Prostate gland (tissue), 2 donors: ENCODE measurements at regions of chr6 and their contacts with region 1.

Region 1: GRCh38 chr6:35452186-35453090 is at the start of gene FANCE:
- DNase-seq: peak; percentile 94
- H3K4me3 ChIP-seq: peak within 1 kb of the TSS; percentile 49 to 64
- H3K27ac ChIP-seq: peak within 1 kb of the TSS; percentile 76 to 78
- H3K4me1 ChIP-seq: no peaks in the 10 kb centered on the region
- H3K27me3 ChIP-seq: no peaks in the 10 kb centered on the region
- CTCF ChIP-seq: peak in 1 of 4 experiments; percentile 23
- POLR2A ChIP-seq: peak; percentile 86
- total RNA-seq, gene FANCE: 7.5 to 14.0 TPM

Region 2: DNA sequence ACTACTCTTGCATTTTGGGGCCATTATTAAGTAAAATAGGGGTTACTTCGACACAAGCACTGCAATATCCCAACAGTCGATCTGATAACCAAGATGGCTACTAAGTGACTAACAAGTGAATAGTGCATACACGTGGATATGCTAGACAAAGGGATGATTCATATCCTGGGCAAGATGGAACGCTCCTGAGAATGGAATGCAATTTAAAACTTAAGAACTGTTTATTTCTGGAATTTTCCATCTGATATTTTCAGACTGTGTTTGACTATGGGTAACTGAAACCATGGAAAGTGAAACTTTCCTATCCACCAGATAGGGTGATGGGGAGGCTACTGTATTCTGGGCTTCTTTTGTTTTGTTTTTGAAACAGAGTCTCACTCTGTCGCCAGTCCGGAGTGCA is 822.4 kb before region 1 on chr6:
- intact Hi-C with region 1: no loop called
- DNase-seq: no peak
- H3K4me3 ChIP-seq: no peak overlapping the region
- H3K27ac ChIP-seq: no peak overlapping the region
- H3K4me1 ChIP-seq: no peaks in the 10 kb centered on the region
- H3K27me3 ChIP-seq: no peaks in the 10 kb centered on the region
- CTCF ChIP-seq: no peak
- POLR2A ChIP-seq: no peak

Region 3: GRCh38 chr6:35294308-35294945 is 158.0 kb before region 1 on chr6:
- intact Hi-C with region 1: loop called (anchors 5 kb)
- DNase-seq: peak; percentile 43
- H3K4me3 ChIP-seq: no peak overlapping the region
- H3K27ac ChIP-seq: no peak overlapping the region
- H3K4me1 ChIP-seq: no peaks in the 10 kb centered on the region
- H3K27me3 ChIP-seq: no peaks in the 10 kb centered on the region
- CTCF ChIP-seq: peak; percentile 44 to 80 (median 64)
- POLR2A ChIP-seq: no peak

Region 4: GRCh38 chr6:35415065-35415991 is 37.1 kb before region 1 on chr6:
- intact Hi-C with region 1: loop called (anchors 5 kb)
- DNase-seq: peak; percentile 88
- H3K4me3 ChIP-seq: no peak overlapping the region
- H3K27ac ChIP-seq: no peak overlapping the region
- H3K4me1 ChIP-seq: peaks cover 5% of the 10 kb centered on the region
- H3K27me3 ChIP-seq: no peaks in the 10 kb centered on the region
- CTCF ChIP-seq: peak; percentile 53 to 93 (median 78)
- POLR2A ChIP-seq: no peak

Region 5: GRCh38 chr6:35468181-35468979 is 15.9 kb after region 1 on chr6 and contains the start of gene RPL10A:
- intact Hi-C with region 1: loop called (anchors 2 kb)
- DNase-seq: peak; percentile 97
- H3K4me3 ChIP-seq: peak within 1 kb of the TSS; percentile 77 to 81
- H3K27ac ChIP-seq: peak within 1 kb of the TSS; percentile 90 to 93
- H3K4me1 ChIP-seq: no peaks in the 10 kb centered on the region
- H3K27me3 ChIP-seq: no peaks in the 10 kb centered on the region
- CTCF ChIP-seq: peak; percentile 94 to 100 (median 97)
- POLR2A ChIP-seq: peak; percentile 94
- total RNA-seq, gene RPL10A: 897 to 2,172 TPM

Region 6: GRCh38 chr6:35876902-35877301 is 424.5 kb after region 1 on chr6:
- intact Hi-C with region 1: no loop called
- DNase-seq: no peak
- H3K4me3 ChIP-seq: no peak overlapping the region
- H3K27ac ChIP-seq: no peak overlapping the region
- H3K4me1 ChIP-seq: no peaks in the 10 kb centered on the region
- H3K27me3 ChIP-seq: no peaks in the 10 kb centered on the region
- CTCF ChIP-seq: no peak
- POLR2A ChIP-seq: no peak

Region 7: GRCh38 chr6:35955976-35956375 is 503.5 kb after region 1 on chr6:
- intact Hi-C with region 1: no loop called
- DNase-seq: no peak
- H3K4me3 ChIP-seq: no peak overlapping the region
- H3K27ac ChIP-seq: no peak overlapping the region
- H3K4me1 ChIP-seq: no peaks in the 10 kb centered on the region
- H3K27me3 ChIP-seq: no peaks in the 10 kb centered on the region
- CTCF ChIP-seq: no peak
- POLR2A ChIP-seq: no peak